Aorta (tissue), 5 donors: ENCODE measurements at regions of chr4 and their contacts with region 1.

Region 1: GRCh38 chr4:10096201-10096977 is 20.2 kb downstream of the WDR1 start:
- DNase-seq: peak in 1 of 2 donors; percentile 94
- ATAC-seq: peak; percentile 81
- H3K4me3 ChIP-seq: no peak overlapping the region
- H3K27ac ChIP-seq: peak overlapping the region; percentile 53 to 72
- H3K4me1 ChIP-seq: peaks cover 0 to 5% of the 10 kb centered on the region in 2 donors
- H3K27me3 ChIP-seq: no peaks in the 10 kb centered on the region

Region 2: GRCh38 chr4:10116580-10117358 is 20.4 kb after region 1 on chr4 and contains the start of gene WDR1:
- intact Hi-C with region 1: loop called in 1 of 2 experiments (anchors 1 kb)
- DNase-seq: peak; percentile 99
- ATAC-seq: peak; percentile 97
- H3K4me3 ChIP-seq: peak within 1 kb of the TSS; percentile 94 to 96
- H3K27ac ChIP-seq: peak within 1 kb of the TSS; percentile 91 to 94
- H3K4me1 ChIP-seq: peaks cover 5% of the 10 kb centered on the region in 2 donors
- H3K27me3 ChIP-seq: no peaks in the 10 kb centered on the region
- total RNA-seq, gene WDR1: 339 to 593 TPM

Region 3: GRCh38 chr4:10129196-10130177 is 33.1 kb after region 1 on chr4:
- intact Hi-C with region 1: no loop called
- DNase-seq: no peak
- ATAC-seq: peak; percentile 44
- H3K4me3 ChIP-seq: no peak overlapping the region
- H3K27ac ChIP-seq: no peak overlapping the region
- H3K4me1 ChIP-seq: no peaks in the 10 kb centered on the region
- H3K27me3 ChIP-seq: no peaks in the 10 kb centered on the region

Region 4: DNA sequence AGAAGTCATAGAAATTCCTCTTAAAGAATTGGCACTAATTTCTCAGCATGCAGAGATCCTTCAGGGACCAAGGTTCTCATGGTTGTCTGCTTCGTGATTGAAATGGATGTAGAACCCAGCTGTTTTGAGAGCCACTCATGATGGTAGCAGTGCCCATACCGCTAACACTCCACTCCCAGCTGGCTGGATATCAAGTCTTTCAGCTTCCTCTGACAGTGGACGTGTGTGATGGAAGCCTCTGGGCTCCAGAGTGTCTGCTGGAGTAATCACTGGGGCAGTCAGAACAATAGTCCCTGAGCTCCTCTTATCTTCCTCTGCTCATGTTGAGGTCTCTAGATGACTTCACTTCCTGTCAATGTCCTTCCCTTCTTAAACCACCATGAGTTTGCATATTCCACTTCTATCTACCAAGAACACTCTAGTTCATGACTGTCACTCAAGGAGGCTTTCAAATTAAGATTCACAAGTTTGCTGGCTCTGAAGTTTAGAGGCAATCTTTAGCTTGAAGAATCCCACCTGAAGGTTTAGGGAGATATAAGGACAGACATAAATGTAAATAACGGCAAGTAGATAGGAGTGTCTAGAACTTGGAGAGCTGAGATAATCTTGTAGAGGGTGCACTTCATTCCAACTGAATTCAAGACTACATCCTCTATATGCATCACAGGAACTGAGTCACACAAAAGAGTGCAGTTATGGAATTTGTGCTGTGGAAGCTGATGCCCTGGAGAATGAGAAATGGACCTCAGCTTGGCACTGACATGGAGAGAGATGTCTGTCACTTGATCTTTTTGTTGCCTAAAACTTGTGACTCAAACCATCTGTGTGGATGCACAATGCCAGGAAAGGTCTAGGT is 84.8 kb after region 1 on chr4:
- intact Hi-C with region 1: no loop called
- DNase-seq: no peak
- ATAC-seq: no peak
- H3K4me3 ChIP-seq: no peak overlapping the region
- H3K27ac ChIP-seq: no peak overlapping the region
- H3K4me1 ChIP-seq: no peaks in the 10 kb centered on the region
- H3K27me3 ChIP-seq: no peaks in the 10 kb centered on the region